ENCODE measurements at regions of chr11 and their contacts with region 1.

Region 1: GRCh38 chr11:72471005-72471898 is 36.9 kb upstream of the CLPB start:
- DNase-seq: peak; percentile 81 to 84
- H3K4me3 ChIP-seq: no peak overlapping the region
- H3K4me3 Mint-ChIP-seq: no peak overlapping the region
- H3K27ac Mint-ChIP-seq: no peak overlapping the region
- H3K4me1 ChIP-seq: no peaks in the 10 kb centered on the region
- H3K4me1 Mint-ChIP-seq: peaks cover 7% of the 10 kb centered on the region
- H3K27me3 ChIP-seq: no peaks in the 10 kb centered on the region; the same call in 1 of the 2 replicates
- H3K27me3 Mint-ChIP-seq: peaks cover 12% of the 10 kb centered on the region
- CTCF ChIP-seq: peak; percentile 94 to 96

Region 2: GRCh38 chr11:72430741-72431570 is 40.3 kb before region 1 on chr11:
- CTCF ChIA-PET with region 1: interaction called, 13 read pairs
- POLR2A ChIA-PET with region 1: no interaction called
- intact Hi-C with region 1: no loop called
- DNase-seq: peak; percentile 63 to 68
- H3K4me3 ChIP-seq: no peak overlapping the region
- H3K4me3 Mint-ChIP-seq: no peak overlapping the region
- H3K27ac Mint-ChIP-seq: no peak overlapping the region
- H3K4me1 ChIP-seq: peaks cover 9% of the 10 kb centered on the region; the same call in 1 of the 2 replicates
- H3K4me1 Mint-ChIP-seq: peaks cover 18% of the 10 kb centered on the region
- H3K27me3 ChIP-seq: no peaks in the 10 kb centered on the region
- H3K27me3 Mint-ChIP-seq: no peaks in the 10 kb centered on the region
- CTCF ChIP-seq: peak; percentile 93 to 94

Region 3: DNA sequence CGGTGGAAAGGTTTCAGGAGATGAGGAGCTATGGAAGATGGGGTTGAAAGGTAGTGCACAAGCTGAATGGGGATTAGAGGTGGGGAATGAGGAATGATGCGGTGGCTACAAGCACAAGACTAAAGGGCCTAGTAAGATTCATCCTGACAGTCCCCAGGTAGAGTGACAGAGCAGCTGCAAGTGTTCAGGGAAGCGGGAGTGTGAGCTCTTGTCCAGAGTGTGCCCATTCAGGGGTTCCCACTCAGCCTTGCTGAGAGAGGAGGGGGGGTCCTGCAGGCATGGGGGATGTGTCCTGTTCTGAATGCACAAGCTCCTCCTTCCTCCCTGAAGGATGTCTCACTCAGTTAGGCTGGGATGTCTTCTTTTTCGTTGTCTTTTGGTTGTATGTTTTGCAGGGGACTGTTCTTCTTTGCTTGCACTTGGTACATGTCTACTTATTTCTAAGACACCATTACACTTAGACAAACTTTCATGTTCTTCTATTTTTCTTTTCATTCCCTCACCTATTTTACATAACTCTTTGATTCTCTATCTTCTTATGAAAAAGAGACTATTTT is 11.1 kb before region 1 on chr11:
- CTCF ChIA-PET with region 1: interaction called, 25 read pairs
- POLR2A ChIA-PET with region 1: no interaction called
- intact Hi-C with region 1: no loop called
- DNase-seq: no peak
- H3K4me3 ChIP-seq: no peak overlapping the region
- H3K4me3 Mint-ChIP-seq: no peak overlapping the region
- H3K27ac Mint-ChIP-seq: no peak overlapping the region
- H3K4me1 ChIP-seq: no peaks in the 10 kb centered on the region
- H3K4me1 Mint-ChIP-seq: no peaks in the 10 kb centered on the region
- H3K27me3 ChIP-seq: no peaks in the 10 kb centered on the region; the same call in 1 of the 2 replicates
- H3K27me3 Mint-ChIP-seq: peaks cover 36% of the 10 kb centered on the region
- CTCF ChIP-seq: no peak

Region 4: DNA sequence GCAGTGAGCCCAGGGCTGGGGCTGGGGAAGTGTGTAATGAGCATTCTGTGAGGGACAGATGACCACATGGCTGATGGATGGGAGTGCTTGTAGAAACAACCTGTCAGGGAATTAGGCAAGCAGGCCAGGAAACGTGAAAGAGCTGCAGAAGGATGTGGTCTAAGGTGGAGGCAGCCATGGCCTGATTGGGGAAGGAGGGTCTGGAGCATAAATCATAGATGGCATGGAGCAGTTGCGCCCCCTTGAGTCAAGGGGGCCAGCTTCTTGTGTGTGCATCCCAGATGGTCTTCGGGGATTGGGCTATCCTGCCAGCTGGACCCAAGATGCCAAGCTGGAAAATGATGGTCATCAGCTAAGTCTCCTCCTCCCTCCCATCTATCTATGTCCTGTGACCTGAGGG is 82.5 kb after region 1 on chr11:
- CTCF ChIA-PET with region 1: interaction called, 10 read pairs
- POLR2A ChIA-PET with region 1: no interaction called
- intact Hi-C with region 1: no loop called
- DNase-seq: no peak
- H3K4me3 ChIP-seq: no peak overlapping the region
- H3K4me3 Mint-ChIP-seq: no peak overlapping the region
- H3K27ac Mint-ChIP-seq: no peak overlapping the region
- H3K4me1 ChIP-seq: no peaks in the 10 kb centered on the region
- H3K4me1 Mint-ChIP-seq: peaks cover 18% of the 10 kb centered on the region
- H3K27me3 ChIP-seq: no peaks in the 10 kb centered on the region
- H3K27me3 Mint-ChIP-seq: no peaks in the 10 kb centered on the region
- CTCF ChIP-seq: peak in 1 of 2 experiments; percentile 42

Region 5: GRCh38 chr11:72585762-72586311 is 114.6 kb after region 1 on chr11:
- CTCF ChIA-PET with region 1: interaction called, 31 read pairs
- POLR2A ChIA-PET with region 1: no interaction called
- intact Hi-C with region 1: loop called (anchors 1 kb)
- DNase-seq: peak; percentile 75 to 86
- H3K4me3 ChIP-seq: no peak overlapping the region
- H3K4me3 Mint-ChIP-seq: no peak overlapping the region
- H3K27ac Mint-ChIP-seq: no peak overlapping the region
- H3K4me1 ChIP-seq: no peaks in the 10 kb centered on the region
- H3K4me1 Mint-ChIP-seq: no peaks in the 10 kb centered on the region
- H3K27me3 ChIP-seq: peaks cover under 1% of the 10 kb centered on the region; the same call in 1 of the 2 replicates
- H3K27me3 Mint-ChIP-seq: peaks cover 7% of the 10 kb centered on the region
- CTCF ChIP-seq: peak; percentile 97 to 98

Region 6: GRCh38 chr11:72642884-72643511 is 171.7 kb after region 1 on chr11:
- CTCF ChIA-PET with region 1: interaction called, 42 read pairs
- POLR2A ChIA-PET with region 1: no interaction called
- intact Hi-C with region 1: loop called (anchors 1 kb)
- DNase-seq: peak; percentile 60 to 85
- H3K4me3 ChIP-seq: peak overlapping the region; percentile 52
- H3K4me3 Mint-ChIP-seq: peak overlapping the region; percentile 61
- H3K27ac Mint-ChIP-seq: no peak overlapping the region
- H3K4me1 ChIP-seq: peaks cover 5% of the 10 kb centered on the region; the same call in 1 of the 2 replicates
- H3K4me1 Mint-ChIP-seq: no peaks in the 10 kb centered on the region
- H3K27me3 ChIP-seq: peaks cover 12% of the 10 kb centered on the region
- H3K27me3 Mint-ChIP-seq: peaks cover 3% of the 10 kb centered on the region
- CTCF ChIP-seq: peak; percentile 97 to 100

Measured in Caco-2 (cell line).